K562 (cell line): ENCODE measurements at regions of chr22 and their contacts with region 1.

Region 1: DNA sequence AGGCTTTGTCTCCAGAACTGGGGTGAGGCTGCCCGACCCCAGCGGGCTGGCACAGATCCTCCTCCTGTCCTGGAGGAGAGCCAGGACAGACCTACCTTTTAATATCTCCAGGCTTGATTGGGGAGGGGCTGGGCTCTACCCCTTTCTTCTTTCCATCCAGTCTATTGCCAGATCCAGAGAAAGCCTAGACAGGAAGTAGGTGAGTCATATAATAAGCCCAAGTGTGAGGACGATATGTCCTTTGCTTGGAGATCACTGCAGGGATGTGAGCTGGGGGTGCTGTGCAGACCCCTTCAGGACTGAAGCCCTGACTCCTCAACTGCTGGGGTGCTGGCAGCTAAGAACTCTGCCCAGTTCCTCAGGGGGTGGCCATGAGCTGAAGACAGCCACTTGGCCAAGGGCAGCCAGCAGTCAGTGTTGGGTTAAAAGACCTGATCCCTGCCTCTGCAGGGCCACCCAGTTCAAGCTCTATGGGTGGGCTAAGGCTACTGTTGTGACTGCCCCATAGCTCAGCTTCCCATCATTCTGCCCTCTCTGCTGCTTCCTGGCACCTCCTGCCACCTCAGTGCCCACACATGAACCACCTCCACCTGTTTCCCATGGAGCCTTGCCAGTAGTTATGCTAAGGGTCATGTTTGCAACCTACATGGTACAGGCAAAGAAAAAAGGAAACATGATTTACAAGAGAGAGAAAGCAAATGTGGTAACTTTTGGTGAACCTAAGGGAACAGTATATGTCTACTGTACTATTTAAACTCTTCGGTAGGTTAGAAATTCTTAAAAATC is 8.3 kb upstream of the C22orf39 start:
- DNase-seq: no peak
- ATAC-seq: no peak
- H3K4me3 ChIP-seq: no peak overlapping the region
- H3K27ac ChIP-seq: no peak overlapping the region
- H3K4me1 ChIP-seq: no peaks in the 10 kb centered on the region
- H3K27me3 ChIP-seq: no peaks in the 10 kb centered on the region
- CTCF ChIP-seq: no peak
- EP300 ChIP-seq: no peak
- POLR2A ChIP-seq: no peak
- RAD21 ChIP-seq: no peak

Region 2: DNA sequence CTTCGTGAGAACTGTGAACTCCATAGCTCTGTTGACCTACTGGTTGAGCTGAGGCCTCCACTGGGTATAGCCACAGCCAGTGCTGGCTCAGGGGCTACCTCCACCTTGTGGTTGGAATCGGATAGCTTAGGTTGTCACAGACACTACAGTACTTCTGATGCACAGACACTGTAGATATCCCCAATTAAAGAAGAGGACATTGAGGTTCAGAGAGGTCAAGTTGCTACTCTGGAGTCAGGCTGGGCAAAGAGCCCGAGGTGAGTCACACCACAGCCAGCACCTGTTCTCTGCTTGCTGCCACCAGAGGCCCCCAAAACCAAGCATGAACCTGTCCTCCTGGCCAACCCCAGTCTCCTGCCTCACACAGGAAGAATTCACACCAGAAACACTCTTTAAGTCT is 17.8 kb after region 1 on chr22:
- CTCF ChIA-PET with region 1: no interaction called
- POLR2A ChIA-PET with region 1: interaction called, 148 read pairs
- in situ Hi-C with region 1: no loop called
- intact Hi-C with region 1: no loop called
- DNase-seq: peak in 1 of 4 experiments; percentile 38
- ATAC-seq: peak; percentile 47
- H3K4me3 ChIP-seq: no peak overlapping the region
- H3K27ac ChIP-seq: no peak overlapping the region
- H3K4me1 ChIP-seq: peaks cover 0 to 8% of the 10 kb centered on the region in 2 experiments; a peak in 3 of 5 replicates
- H3K27me3 ChIP-seq: no peaks in the 10 kb centered on the region
- CTCF ChIP-seq: peak; percentile 50 to 55 (median 54); a peak in 5 of 6 replicates
- EP300 ChIP-seq: no peak
- POLR2A ChIP-seq: no peak
- RAD21 ChIP-seq: no peak